Testis (tissue), 5 donors: ENCODE measurements at regions of chr12 and their contacts with region 1.

Region 1: DNA sequence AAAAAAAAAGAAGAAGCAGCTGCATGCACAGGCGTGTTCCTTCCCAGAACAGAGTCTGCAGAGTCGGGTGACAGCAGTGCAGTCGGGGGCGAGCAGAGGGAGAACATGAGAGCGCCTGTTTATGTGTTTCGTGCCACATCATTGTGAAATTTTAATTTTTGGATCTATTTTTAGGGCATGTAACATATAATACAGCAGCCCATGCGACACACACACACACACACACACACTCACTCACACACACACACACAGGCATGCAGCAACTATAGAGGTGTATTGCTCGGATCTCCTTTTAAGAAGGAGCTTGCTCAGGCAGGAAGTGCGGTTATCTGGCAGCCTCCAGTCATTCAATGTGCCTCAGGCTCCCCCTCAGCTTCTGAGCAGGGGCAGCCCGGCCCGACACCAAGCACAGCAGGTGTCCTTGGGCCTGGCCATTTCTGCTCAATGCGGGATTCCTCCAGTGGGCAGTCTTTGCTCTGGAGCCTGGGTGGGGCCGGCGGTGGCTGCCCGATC is 71.8 kb downstream of the ZNF664 start:
- DNase-seq: no peak
- H3K4me3 ChIP-seq: no peak overlapping the region
- H3K27ac ChIP-seq: no peak overlapping the region
- H3K4me1 ChIP-seq: no peaks in the 10 kb centered on the region
- H3K27me3 ChIP-seq: no peaks in the 10 kb centered on the region
- CTCF ChIP-seq: no peak
- POLR2A ChIP-seq: no peak

Region 2: DNA sequence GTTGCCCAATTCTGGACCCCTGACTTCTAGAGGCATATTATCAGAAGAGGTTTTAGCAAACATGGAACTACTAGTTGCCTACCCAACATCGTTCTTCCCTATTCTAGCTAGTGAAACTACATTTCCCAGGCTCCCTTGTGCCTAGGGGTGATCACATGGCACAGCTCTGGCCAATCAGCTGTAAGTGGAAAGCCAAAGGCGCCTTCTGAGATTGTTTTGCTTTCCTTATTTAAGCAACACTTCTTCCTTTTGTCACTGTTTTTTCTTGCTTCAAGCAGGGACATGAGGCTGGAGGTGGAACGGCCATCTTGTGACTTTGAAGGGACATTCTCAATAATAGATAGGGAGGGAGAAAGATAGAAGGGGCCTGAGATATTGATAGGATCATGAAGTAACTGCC is 64.9 kb after region 1 on chr12:
- intact Hi-C with region 1: no loop called
- DNase-seq: peak; percentile 69
- H3K4me3 ChIP-seq: no peak overlapping the region
- H3K27ac ChIP-seq: no peak overlapping the region
- H3K4me1 ChIP-seq: no peaks in the 10 kb centered on the region
- H3K27me3 ChIP-seq: no peaks in the 10 kb centered on the region
- CTCF ChIP-seq: no peak
- POLR2A ChIP-seq: no peak

Region 3: GRCh38 chr12:124767066-124767821 is 722.4 kb after region 1 on chr12:
- intact Hi-C with region 1: loop called (anchors 5 kb)
- DNase-seq: peak; percentile 87
- H3K4me3 ChIP-seq: no peak overlapping the region
- H3K27ac ChIP-seq: no peak overlapping the region
- H3K4me1 ChIP-seq: peaks cover 29% of the 10 kb centered on the region
- H3K27me3 ChIP-seq: no peaks in the 10 kb centered on the region
- CTCF ChIP-seq: peak; percentile 99 to 100 (median 100)
- POLR2A ChIP-seq: no peak